CD8-positive, alpha-beta memory T cell (primary cell): ENCODE measurements at regions of chr6 and their contacts with region 1.

Region 1: GRCh38 chr6:106117579-106117978 is 31.4 kb downstream of the PRDM1 start:
- DNase-seq: peak; percentile 59 to 84 (median 80)
- H3K4me3 ChIP-seq: no peak overlapping the region
- H3K4me3 Mint-ChIP-seq: peak overlapping the region; percentile 6 to 85 (median 68)
- H3K27ac ChIP-seq: no peak overlapping the region
- H3K27ac Mint-ChIP-seq: peak overlapping the region; percentile 83 to 98 (median 93)
- H3K4me1 ChIP-seq: peaks cover 56% of the 10 kb centered on the region
- H3K4me1 Mint-ChIP-seq: peaks cover 66 to 81% (median 75%) of the 10 kb centered on the region in 3 donors
- H3K27me3 ChIP-seq: no peaks in the 10 kb centered on the region
- H3K27me3 Mint-ChIP-seq: peaks cover 0 to 1% of the 10 kb centered on the region in 2 donors

Region 2: GRCh38 chr6:105862936-105863607 is 254.5 kb before region 1 on chr6:
- CTCF ChIA-PET with region 1: no interaction called
- POLR2A ChIA-PET with region 1: no interaction called
- DNase-seq: no peak
- H3K4me3 ChIP-seq: no peak overlapping the region
- H3K4me3 Mint-ChIP-seq: no peak overlapping the region
- H3K27ac ChIP-seq: no peak overlapping the region
- H3K27ac Mint-ChIP-seq: no peak overlapping the region
- H3K4me1 ChIP-seq: no peaks in the 10 kb centered on the region
- H3K4me1 Mint-ChIP-seq: no peaks in the 10 kb centered on the region
- H3K27me3 ChIP-seq: no peaks in the 10 kb centered on the region
- H3K27me3 Mint-ChIP-seq: peaks cover 0 to 3% of the 10 kb centered on the region in 2 donors

Region 3: GRCh38 chr6:106085984-106086813 is 31.4 kb before region 1 on chr6 and contains the start of gene PRDM1:
- CTCF ChIA-PET with region 1: interaction called, 16 read pairs
- POLR2A ChIA-PET with region 1: interaction called, 3 read pairs
- DNase-seq: peak; percentile 52 to 88 (median 81)
- H3K4me3 ChIP-seq: peak within 1 kb of the TSS; percentile 61
- H3K4me3 Mint-ChIP-seq: peak within 1 kb of the TSS; percentile 90 to 97 (median 93)
- H3K27ac ChIP-seq: peak within 1 kb of the TSS; percentile 52
- H3K27ac Mint-ChIP-seq: peak within 1 kb of the TSS; percentile 61 to 97 (median 92)
- H3K4me1 ChIP-seq: peaks cover 66% of the 10 kb centered on the region
- H3K4me1 Mint-ChIP-seq: peaks cover 80 to 94% (median 93%) of the 10 kb centered on the region in 3 donors
- H3K27me3 ChIP-seq: no peaks in the 10 kb centered on the region
- H3K27me3 Mint-ChIP-seq: peaks cover 0 to 4% of the 10 kb centered on the region in 2 donors
- total RNA-seq, gene PRDM1: 88.2 to 90.7 TPM

Region 4: DNA sequence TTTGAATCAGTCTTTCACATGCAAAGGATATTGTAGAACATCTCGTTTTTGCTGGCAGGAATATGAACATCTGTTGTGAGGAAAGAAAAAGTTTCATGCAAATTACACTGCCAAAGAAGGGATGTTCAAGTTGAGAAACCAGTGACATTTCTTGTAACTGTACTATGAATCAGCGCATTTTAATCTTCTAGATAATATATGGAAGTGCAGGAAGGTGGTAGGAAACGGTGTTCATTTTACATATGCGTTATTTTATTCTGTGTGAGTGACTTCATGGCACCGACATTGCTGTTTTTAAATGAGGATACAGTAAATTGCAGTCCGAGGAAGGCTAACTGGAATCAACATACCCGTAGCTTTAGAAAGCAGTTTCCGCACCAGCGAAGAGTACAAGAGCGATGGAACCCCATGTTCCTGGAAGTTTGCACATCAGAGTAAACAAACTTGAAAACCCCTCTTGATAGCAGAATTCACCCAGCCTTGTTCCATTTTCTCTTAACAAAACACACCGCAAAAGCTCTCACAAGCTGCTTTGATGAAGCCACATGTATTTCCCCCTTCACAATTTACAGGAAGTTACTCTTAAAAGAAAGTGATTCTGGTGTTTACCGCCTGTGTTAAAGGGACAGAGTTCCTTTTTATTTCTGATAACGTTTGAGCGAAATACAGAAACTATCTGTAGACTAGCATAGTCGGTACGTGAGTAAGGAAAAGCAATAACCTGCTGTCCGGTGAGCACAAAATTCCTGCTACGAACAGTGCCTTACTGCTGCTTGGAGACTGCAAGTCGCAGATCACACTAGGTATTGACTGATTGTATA is 20.0 kb before region 1 on chr6:
- CTCF ChIA-PET with region 1: interaction called, 18 read pairs
- POLR2A ChIA-PET with region 1: interaction called, 16 read pairs
- DNase-seq: peak in 4 of 5 donors; percentile 37 to 87 (median 78)
- H3K4me3 ChIP-seq: peak overlapping the region; percentile 75
- H3K4me3 Mint-ChIP-seq: peak overlapping the region; percentile 92 to 100 (median 96)
- H3K27ac ChIP-seq: peak overlapping the region; percentile 76
- H3K27ac Mint-ChIP-seq: peak overlapping the region; percentile 81 to 98 (median 95)
- H3K4me1 ChIP-seq: peaks cover 64% of the 10 kb centered on the region
- H3K4me1 Mint-ChIP-seq: peaks cover 67 to 94% (median 91%) of the 10 kb centered on the region in 3 donors
- H3K27me3 ChIP-seq: no peaks in the 10 kb centered on the region
- H3K27me3 Mint-ChIP-seq: no peaks in the 10 kb centered on the region

Region 5: DNA sequence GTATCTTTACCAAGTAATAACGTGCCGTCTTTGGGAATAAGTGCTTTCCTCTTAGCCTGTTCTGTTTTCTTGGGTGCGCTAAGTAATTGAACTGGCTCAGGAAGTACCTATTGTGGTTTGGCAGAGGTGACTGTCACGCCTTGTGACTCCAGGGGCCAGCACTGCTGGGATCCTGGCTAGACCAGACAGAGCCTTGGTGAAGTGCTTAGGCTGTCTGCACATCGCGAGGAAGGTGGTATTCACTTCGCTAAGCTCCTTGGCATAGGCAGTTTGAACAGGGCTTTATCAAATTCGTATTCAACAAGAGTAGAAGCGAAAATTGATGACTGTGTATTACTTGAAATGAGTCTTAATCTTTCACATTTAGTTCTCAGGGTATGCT is 13.9 kb before region 1 on chr6:
- CTCF ChIA-PET with region 1: interaction called, 18 read pairs
- POLR2A ChIA-PET with region 1: interaction called, 16 read pairs
- DNase-seq: peak in 4 of 5 donors; percentile 48 to 68 (median 55)
- H3K4me3 ChIP-seq: peak overlapping the region; percentile 75
- H3K4me3 Mint-ChIP-seq: peak overlapping the region; percentile 92 to 100 (median 96)
- H3K27ac ChIP-seq: peak overlapping the region; percentile 52
- H3K27ac Mint-ChIP-seq: peak overlapping the region; percentile 66 to 98 (median 95)
- H3K4me1 ChIP-seq: peaks cover 55% of the 10 kb centered on the region
- H3K4me1 Mint-ChIP-seq: peaks cover 69 to 99% (median 97%) of the 10 kb centered on the region in 3 donors
- H3K27me3 ChIP-seq: no peaks in the 10 kb centered on the region
- H3K27me3 Mint-ChIP-seq: no peaks in the 10 kb centered on the region

Region 6: DNA sequence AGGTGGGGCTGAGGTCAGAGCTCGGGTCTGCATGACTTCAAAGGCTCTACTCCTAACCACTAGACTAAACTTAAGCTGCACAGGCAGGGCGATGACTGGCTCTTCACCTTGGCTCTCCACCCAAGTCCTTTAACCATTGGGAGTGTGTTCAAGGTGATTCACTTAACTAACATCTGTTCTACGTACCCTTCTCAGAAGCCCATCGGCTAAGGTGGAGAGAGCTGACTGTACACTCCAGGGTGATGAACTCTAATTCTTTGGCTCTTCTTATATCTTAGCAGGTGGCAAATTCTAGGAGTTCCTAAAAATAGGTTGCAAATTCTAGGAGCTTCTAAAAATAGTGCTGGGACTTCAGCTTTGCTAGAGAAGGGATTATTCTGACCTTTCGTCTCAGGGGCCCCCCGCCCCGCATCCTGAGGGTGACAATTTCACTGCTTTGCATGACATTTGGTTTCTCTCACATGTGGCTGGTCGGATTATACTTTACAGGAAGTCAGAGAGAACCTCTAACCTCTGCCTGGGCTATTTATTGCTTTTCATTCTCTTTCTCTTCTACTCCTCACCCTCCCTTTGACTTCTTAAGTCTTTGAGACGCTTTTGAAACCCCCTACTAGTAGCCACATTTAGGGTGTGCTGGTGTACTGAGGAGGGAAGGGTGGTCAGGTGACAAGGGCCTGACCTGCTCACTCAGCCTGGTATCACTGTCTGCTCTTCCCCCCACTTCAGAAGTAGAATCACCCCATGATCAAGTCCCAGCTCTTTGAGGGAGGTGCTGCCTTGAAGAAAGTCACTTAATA is 24.1 kb after region 1 on chr6:
- CTCF ChIA-PET with region 1: interaction called, 21 read pairs
- POLR2A ChIA-PET with region 1: interaction called, 5 read pairs
- DNase-seq: peak in 3 of 5 donors; percentile 27 to 54 (median 28)
- H3K4me3 ChIP-seq: peak overlapping the region; percentile 15
- H3K4me3 Mint-ChIP-seq: peak overlapping the region; percentile 48 to 89 (median 73)
- H3K27ac ChIP-seq: peak overlapping the region; percentile 28
- H3K27ac Mint-ChIP-seq: peak overlapping the region; percentile 73 to 95 (median 93)
- H3K4me1 ChIP-seq: peaks cover 39% of the 10 kb centered on the region
- H3K4me1 Mint-ChIP-seq: peaks cover 42 to 61% (median 60%) of the 10 kb centered on the region in 3 donors
- H3K27me3 ChIP-seq: no peaks in the 10 kb centered on the region
- H3K27me3 Mint-ChIP-seq: no peaks in the 10 kb centered on the region